ENCODE measurements at regions of chr15 and their contacts with region 1.

Region 1: GRCh38 chr15:51750792-51751685 is at the start of gene TMOD2:
- DNase-seq: peak; percentile 24

Region 2: GRCh38 chr15:51547656-51548055 is 203.4 kb before region 1 on chr15:
- in situ Hi-C with region 1: no loop called
- DNase-seq: no peak

Region 3: DNA sequence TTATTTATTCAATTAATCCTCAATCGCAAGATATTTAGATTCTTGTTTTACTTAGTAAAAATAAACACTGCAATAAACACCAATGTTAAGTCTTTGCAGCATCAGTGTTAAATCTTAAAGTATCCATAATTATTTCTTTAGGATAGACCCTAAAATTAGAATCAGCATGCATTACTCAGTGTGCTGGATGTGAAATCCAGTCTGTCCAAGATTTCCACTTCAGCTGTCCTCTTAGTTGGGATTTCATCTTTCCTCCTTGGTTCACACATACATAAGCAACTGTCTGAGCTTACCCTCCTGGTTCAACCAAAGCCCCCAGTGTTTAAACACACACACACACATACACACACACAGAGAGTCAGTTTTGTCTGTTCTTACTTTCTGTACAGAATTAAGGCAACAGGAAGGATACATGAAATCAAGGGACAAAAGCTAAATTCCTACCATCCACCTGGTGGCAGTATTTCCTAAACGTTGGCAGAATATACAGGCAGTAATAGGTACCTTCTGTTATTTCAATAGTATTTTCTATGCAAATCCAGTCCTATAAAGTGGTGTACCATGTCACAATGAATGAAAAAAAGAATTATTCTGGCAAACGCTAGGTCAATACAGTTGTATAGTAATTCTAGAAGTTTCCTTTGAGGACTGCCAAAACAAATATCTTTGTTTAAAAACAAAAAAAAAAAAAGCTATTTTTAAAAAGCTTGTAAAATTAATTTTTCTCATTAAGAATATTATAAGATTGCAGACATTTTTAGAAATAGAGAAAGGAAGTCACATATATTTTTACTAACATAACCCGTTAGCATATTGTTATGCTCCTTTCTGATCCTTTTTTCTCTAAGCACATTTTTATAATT is 101.1 kb before region 1 on chr15:
- in situ Hi-C with region 1: loop called (anchors 25 kb)
- DNase-seq: peak; percentile 74

Measured in ACHN (cell line).